Colonic mucosa (tissue), 4 donors: ENCODE measurements at regions of chr22 and their contacts with region 1.

Region 1: DNA sequence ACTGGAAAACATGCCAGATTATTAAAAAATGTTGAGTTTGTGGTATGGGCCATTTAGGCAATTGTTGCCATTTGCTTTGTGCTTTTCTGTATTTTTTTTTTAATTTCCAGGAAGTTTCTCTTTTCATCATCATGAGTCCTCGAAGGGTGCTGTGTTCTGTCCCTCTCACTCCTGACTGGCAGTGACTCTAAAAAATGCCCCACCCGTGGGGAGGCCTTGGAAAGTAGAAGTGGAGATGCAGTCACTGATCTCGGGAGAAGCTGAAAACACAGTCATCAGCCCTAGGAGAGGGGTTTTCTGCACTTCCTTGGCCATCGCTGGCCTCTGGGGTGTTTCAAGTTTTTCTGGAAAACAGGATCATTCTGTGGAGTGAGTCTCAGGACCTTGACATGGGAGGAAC is 98.5 kb upstream of the GRK3 start:
- DNase-seq: no peak
- H3K4me3 ChIP-seq: no peak overlapping the region
- H3K27ac ChIP-seq: no peak overlapping the region
- H3K4me1 ChIP-seq: no peaks in the 10 kb centered on the region
- H3K27me3 ChIP-seq: no peaks in the 10 kb centered on the region
- CTCF ChIP-seq: no peak

Region 2: DNA sequence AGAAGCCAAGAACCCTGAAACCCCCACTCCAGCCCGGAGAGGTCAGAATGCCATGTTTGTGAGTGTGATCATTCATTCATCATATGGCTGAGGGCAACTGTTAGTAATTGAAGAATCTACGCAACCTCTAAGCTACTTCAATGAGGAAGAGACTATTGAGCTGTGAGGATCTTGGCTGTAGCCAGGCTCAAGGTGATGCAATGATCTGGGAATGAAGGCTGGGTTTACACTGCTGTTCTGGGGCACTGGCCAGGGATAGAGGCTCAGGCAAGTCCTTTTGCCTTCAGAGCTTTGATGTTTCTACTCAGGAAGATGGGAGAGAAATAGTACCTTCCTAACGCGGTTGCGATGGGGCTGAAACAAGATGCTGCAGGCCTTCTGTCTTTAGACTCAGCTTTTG is 233.6 kb before region 1 on chr22:
- intact Hi-C with region 1: no loop called
- DNase-seq: no peak
- H3K4me3 ChIP-seq: no peak overlapping the region
- H3K27ac ChIP-seq: no peak overlapping the region
- H3K4me1 ChIP-seq: no peaks in the 10 kb centered on the region
- H3K27me3 ChIP-seq: no peaks in the 10 kb centered on the region
- CTCF ChIP-seq: no peak

Region 3: GRCh38 chr22:25382762-25383161 is 83.2 kb before region 1 on chr22:
- intact Hi-C with region 1: no loop called
- DNase-seq: no peak
- H3K4me3 ChIP-seq: no peak overlapping the region
- H3K27ac ChIP-seq: no peak overlapping the region
- H3K4me1 ChIP-seq: no peaks in the 10 kb centered on the region
- H3K27me3 ChIP-seq: no peaks in the 10 kb centered on the region
- CTCF ChIP-seq: no peak

Region 4: GRCh38 chr22:25702040-25702439 is 236.1 kb after region 1 on chr22:
- intact Hi-C with region 1: loop called (anchors 5 kb)
- DNase-seq: no peak
- H3K4me3 ChIP-seq: no peak overlapping the region
- H3K27ac ChIP-seq: no peak overlapping the region
- H3K4me1 ChIP-seq: no peaks in the 10 kb centered on the region
- H3K27me3 ChIP-seq: no peaks in the 10 kb centered on the region
- CTCF ChIP-seq: peak; percentile 27

Region 5: DNA sequence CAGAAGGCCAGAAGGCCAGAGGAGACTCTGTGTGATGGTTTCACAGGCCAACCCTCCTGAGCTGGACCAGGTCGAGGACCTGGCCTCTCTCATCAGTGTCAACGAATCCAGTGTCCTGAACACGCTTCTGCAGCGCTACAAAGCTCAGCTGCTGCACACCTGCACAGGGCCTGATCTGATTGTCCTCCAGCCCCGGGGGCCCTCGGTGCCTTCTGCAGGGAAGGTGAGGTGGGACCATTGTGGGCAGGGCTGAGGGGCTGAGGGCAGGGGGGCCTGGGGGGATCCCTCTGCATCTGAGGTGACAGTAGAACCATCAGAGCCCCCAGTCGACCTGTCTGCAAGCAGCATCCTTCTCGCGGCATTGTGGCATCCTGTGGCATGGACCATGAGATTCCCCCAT is 306.3 kb after region 1 on chr22:
- intact Hi-C with region 1: loop called (anchors 2 kb)
- DNase-seq: no peak
- H3K4me3 ChIP-seq: no peak overlapping the region
- H3K27ac ChIP-seq: no peak overlapping the region
- H3K4me1 ChIP-seq: no peaks in the 10 kb centered on the region
- H3K27me3 ChIP-seq: no peaks in the 10 kb centered on the region
- CTCF ChIP-seq: no peak